IMR-90 (cell line): ENCODE measurements at regions of chr1 and their contacts with region 1.

Region 1: DNA sequence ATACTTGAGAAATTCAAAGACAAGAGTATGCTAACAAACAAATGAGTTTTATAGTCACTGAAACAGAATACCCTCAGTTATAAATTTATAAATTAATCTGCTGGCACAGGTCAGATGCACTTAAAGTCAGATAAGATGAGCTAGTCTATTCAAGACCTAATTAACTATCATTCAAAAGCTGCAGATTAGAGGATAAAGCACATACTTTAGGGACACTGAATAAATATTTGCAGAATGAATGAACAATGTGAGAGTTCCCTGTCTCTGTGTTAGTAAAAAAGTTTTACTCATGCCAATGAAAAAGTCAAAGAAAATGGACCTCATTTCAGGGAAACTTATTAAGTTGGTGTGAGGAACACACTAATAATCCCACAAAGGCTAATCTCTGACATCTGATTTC is 46.3 kb downstream of the CD160 start:
- DNase-seq: no peak
- ATAC-seq: no peak
- H3K4me3 ChIP-seq: no peak overlapping the region
- H3K27ac ChIP-seq: no peak overlapping the region
- H3K4me1 ChIP-seq: no peaks in the 10 kb centered on the region
- H3K27me3 ChIP-seq: no peaks in the 10 kb centered on the region
- CTCF ChIP-seq: no peak
- POLR2A ChIP-seq: no peak
- RAD21 ChIP-seq: no peak

Region 2: DNA sequence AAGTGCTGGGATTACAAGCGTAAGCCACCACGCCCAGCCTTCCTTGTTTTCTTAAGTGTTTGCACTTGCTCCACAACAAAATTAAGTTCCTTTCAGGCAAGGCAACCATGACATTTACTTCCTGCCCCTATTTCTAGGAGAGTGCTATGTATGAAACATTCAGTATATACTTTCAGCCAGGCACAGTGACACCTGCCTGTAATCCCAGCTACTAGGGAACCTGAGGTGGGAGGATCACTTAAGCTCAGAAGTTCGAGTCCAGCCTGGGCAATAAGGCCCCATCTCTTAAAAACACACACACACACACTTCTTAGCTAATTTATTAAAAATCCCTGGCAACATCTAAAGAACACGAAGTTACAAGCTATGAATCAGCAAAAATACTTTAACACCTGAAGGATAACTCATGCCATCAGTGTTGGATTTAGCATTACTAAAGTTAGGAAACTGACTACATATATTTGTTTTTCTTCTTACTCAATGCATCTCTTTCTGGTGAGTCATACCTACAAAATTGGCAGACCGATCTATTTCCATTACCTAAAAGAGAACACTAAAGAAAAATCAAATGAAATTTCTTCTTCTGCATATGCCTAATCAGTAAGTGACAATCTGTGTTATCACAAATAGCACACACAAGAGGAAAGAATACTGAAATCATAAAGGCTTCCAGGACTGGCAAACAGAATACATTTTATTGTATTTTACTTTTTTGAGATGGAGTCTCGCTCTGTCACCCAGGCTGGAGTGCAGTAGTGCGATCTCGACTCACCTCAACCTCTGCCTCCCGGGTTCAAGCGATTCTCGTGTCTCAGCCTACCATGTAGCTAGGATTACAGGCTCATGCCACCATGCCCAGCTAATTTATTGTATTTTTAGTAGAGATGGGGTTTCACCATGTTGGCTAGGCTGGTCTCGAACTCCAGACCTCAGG is 16.9 kb after region 1 on chr1:
- CTCF ChIA-PET with region 1: no interaction called
- POLR2A ChIA-PET with region 1: interaction called, 12 read pairs
- dilution Hi-C with region 1: no loop called
- in situ Hi-C with region 1: no loop called
- intact Hi-C with region 1: no loop called
- DNase-seq: peak; percentile 96
- ATAC-seq: peak; percentile 74
- H3K4me3 ChIP-seq: no peak overlapping the region
- H3K27ac ChIP-seq: peak overlapping the region; percentile 73
- H3K4me1 ChIP-seq: peaks cover 12% of the 10 kb centered on the region; the same call in 1 of the 2 replicates
- H3K27me3 ChIP-seq: no peaks in the 10 kb centered on the region
- CTCF ChIP-seq: no peak
- POLR2A ChIP-seq: no peak
- RAD21 ChIP-seq: no peak